ENCODE measurements at regions of chr2 and their contacts with region 1.

Region 1: DNA sequence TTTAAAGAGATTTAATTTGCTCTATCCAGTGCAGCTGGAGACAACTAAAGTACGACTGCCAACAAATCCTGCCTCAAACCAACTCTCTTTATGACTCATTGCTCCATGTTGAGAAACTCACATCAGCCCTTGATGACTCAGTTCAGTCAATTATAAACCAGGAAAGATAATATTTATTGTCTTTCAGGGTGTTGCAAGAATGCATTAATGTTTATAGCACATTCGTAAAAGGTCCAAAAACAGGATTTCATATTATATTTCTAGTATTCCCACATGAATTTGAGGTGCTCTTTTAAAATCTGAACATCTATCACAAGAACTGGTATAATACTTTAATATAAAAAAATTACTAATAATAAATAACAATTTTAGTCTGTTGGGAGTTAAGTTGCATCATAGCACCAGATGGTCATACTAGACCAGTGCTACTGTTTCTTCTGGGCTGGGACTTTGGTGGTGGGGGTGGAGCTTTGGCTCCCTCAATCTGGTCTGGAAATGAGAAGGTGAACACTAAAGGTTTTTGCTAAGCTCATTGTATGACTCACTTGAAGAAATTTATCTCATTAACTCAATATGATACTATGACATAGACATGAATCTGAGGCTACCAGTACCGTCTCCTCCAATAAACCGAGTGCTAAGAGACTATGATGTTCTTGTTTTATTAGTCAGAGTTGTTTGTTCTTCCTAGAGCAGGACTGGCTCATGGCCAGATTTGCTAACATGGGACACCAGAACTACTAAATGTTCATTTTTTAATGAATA is 26.6 kb upstream of the MAP3K20 start:
- DNase-seq: peak; percentile 98
- H3K4me3 Mint-ChIP-seq: peak overlapping the region; percentile 62
- H3K27ac Mint-ChIP-seq: peak overlapping the region; percentile 98
- H3K4me1 Mint-ChIP-seq: peaks cover 32% of the 10 kb centered on the region
- H3K27me3 Mint-ChIP-seq: no peaks in the 10 kb centered on the region
- CTCF ChIP-seq: no peak

Region 2: DNA sequence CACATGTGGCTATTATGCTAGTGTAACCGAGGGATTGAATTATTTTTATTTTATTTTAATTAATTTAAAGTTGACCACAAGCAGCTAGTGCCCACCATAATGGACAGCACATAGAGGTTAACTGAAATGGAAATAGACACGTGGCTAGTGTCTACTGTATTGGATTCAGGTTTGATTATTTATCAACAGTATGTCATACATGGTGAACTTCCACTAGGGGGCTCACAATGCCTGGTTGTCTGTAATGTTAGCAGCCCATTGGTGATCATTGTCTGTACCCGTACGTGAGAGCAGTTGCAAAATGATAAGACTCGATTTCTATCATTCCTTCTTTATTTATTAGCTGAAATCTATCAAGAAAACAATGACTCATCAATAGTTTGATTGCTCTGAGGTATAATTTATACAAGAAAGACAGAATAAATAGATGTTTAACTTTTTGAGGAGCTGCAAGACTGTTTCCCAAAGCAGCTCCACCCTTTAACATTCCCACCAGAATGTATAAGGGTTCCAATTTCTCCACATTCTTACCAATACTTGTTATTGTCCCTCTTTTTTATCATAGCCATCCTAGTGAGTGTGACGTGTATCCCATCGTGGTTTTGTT is 1450.3 kb before region 1 on chr2:
- CTCF ChIA-PET with region 1: no interaction called
- POLR2A ChIA-PET with region 1: no interaction called
- intact Hi-C with region 1: no loop called
- DNase-seq: peak; percentile 81
- H3K4me3 Mint-ChIP-seq: no peak overlapping the region
- H3K27ac Mint-ChIP-seq: no peak overlapping the region
- H3K4me1 Mint-ChIP-seq: peaks cover 12% of the 10 kb centered on the region
- H3K27me3 Mint-ChIP-seq: no peaks in the 10 kb centered on the region
- CTCF ChIP-seq: peak; percentile 60

Region 3: GRCh38 chr2:172953970-172954852 is 94.9 kb before region 1 on chr2:
- CTCF ChIA-PET with region 1: no interaction called
- POLR2A ChIA-PET with region 1: no interaction called
- intact Hi-C with region 1: no loop called
- DNase-seq: no peak
- H3K4me3 Mint-ChIP-seq: no peak overlapping the region
- H3K27ac Mint-ChIP-seq: no peak overlapping the region
- H3K4me1 Mint-ChIP-seq: no peaks in the 10 kb centered on the region
- H3K27me3 Mint-ChIP-seq: no peaks in the 10 kb centered on the region
- CTCF ChIP-seq: no peak

Region 4: DNA sequence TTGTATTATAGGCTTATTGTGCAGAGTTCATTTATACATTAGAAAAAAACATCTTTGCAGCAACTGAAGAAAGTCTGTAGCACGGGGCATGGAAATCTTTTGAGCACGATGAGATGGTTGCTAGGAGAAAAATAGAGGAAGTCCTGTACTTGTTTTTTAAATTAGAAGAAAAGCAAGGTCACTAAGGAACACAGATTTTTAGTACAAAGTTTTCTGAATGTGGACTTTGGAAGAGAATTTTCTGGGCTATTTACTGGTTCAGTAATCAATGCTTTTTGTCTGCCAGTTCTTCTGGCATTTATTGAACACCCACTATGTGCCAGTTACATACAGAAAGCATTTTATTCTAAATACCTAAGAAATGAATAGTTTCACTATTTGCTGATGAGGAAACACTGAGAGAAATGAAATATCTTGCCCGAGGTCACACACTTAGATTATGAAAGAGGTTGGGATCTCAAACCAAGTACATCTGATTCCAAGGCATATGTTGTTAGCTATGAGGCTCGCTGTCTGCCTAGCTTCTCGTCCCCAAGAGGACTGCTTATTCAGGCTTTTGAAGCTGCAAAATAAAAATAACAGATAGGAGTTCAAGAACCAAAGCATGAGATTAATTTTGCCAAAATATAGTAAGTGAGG is 11.0 kb after region 1 on chr2:
- CTCF ChIA-PET with region 1: interaction called, 3 read pairs
- POLR2A ChIA-PET with region 1: interaction called, 29 read pairs
- intact Hi-C with region 1: no loop called
- DNase-seq: peak; percentile 67
- H3K4me3 Mint-ChIP-seq: no peak overlapping the region
- H3K27ac Mint-ChIP-seq: peak overlapping the region; percentile 85
- H3K4me1 Mint-ChIP-seq: peaks cover 30% of the 10 kb centered on the region
- H3K27me3 Mint-ChIP-seq: no peaks in the 10 kb centered on the region
- CTCF ChIP-seq: no peak